Breast epithelium (tissue), 4 donors: ENCODE measurements at regions of chr14 and their contacts with region 1.

Region 1: DNA sequence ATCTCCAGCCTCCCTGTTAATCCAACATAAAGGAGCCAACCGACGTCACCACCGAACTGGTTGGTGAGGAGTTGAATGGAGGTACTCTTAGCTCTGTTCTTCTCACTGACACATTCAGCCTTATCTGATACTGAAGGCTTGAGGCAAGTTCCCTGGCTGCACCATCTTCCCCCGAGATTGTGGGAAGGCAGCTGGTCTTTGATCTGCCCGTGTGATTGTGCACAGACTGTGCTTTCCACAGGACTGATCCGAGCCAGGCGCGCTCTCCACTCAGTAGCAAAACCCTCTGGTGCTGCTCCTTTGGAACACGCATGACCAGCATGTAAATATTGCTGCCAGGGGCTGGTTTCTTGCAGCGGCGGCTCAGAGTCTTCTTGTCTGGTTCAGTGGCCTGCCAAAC is 30.1 kb upstream of the DLK1 start:
- DNase-seq: no peak
- H3K4me3 ChIP-seq: no peak overlapping the region
- H3K27ac ChIP-seq: no peak overlapping the region
- H3K4me1 ChIP-seq: no peaks in the 10 kb centered on the region
- H3K27me3 ChIP-seq: peaks cover 0 to 8% of the 10 kb centered on the region in 2 donors
- CTCF ChIP-seq: no peak
- POLR2A ChIP-seq: no peak

Region 2: DNA sequence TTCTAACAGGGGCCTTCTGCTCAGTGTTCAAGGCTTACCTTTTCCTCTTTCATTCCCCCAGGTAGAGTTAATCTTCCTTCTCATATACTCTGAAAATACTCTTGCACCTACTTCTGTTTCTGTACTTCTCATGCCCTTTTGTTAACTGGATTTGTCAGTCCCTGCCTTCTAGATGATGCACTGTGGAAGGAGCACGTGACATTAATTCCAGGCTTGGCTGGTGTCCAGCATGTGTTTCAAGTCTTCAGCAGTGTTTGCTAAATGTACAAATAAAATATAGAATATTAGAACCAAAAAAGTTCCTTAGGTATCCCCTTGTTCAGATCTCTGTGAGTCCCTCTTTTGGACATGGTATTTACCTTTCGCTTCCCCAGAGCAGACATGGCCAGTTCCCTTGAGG is 659.2 kb before region 1 on chr14:
- intact Hi-C with region 1: no loop called
- DNase-seq: no peak
- H3K4me3 ChIP-seq: no peak overlapping the region
- H3K27ac ChIP-seq: peak overlapping the region in 1 of 2 donors; percentile 50
- H3K4me1 ChIP-seq: peaks cover 0 to 7% of the 10 kb centered on the region in 2 donors
- H3K27me3 ChIP-seq: no peaks in the 10 kb centered on the region
- CTCF ChIP-seq: no peak
- POLR2A ChIP-seq: no peak

Region 3: GRCh38 chr14:100049220-100049619 is 647.4 kb before region 1 on chr14:
- intact Hi-C with region 1: loop called (anchors 5 kb)
- DNase-seq: no peak
- H3K4me3 ChIP-seq: no peak overlapping the region
- H3K27ac ChIP-seq: peak overlapping the region in 1 of 2 donors; percentile 3
- H3K4me1 ChIP-seq: peaks cover 0 to 5% of the 10 kb centered on the region in 2 donors
- H3K27me3 ChIP-seq: no peaks in the 10 kb centered on the region
- CTCF ChIP-seq: no peak
- POLR2A ChIP-seq: no peak